Heart left ventricle (tissue), 16 donors: ENCODE measurements at regions of chr11 and their contacts with region 1.

Region 1: DNA sequence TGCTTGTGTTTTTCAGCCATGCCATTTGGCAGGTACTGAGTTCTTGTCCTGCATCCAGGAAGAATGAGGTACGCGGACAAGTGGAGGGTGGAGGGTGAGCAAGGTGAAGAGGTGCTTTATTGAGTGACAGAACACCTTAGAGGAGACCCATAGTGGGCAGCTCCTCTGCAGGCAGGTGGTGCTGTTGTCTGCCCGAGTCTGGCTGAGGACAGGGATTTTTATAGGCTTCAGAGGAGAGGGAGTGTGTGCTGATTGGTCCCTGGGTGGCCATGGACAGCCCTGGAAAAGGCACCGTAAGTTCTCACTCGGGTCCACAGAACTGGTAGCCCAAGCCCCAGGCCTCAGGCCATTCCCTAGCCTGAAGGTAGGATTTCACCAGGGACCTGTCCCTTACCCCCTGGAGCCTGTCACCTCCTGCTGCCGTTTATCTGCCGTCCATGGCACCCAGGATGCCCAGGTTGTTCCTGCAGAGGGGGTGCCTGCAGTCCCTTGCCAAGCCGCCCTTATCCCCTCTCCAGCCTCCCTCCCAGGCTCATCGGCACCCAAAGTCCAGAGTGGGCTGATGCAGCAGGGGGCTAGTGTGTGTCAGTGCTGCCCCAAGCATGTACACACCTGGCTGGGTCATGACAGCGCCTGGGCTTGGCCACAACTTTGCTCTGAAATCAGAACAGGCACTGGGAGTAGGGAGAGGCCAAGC is 213.6 kb downstream of the LRRC4C start:
- DNase-seq: peak in 4 of 5 donors; percentile 7 to 43 (median 24)
- ATAC-seq: peak; percentile 64 to 79 (median 71)
- H3K4me3 ChIP-seq: no peak overlapping the region
- H3K27ac ChIP-seq: no peak overlapping the region
- H3K4me1 ChIP-seq: no peaks in the 10 kb centered on the region
- H3K27me3 ChIP-seq: no peaks in the 10 kb centered on the region
- CTCF ChIP-seq: peak in 7 of 12 donors; percentile 8 to 40 (median 28)
- POLR2A ChIP-seq: no peak

Region 2: DNA sequence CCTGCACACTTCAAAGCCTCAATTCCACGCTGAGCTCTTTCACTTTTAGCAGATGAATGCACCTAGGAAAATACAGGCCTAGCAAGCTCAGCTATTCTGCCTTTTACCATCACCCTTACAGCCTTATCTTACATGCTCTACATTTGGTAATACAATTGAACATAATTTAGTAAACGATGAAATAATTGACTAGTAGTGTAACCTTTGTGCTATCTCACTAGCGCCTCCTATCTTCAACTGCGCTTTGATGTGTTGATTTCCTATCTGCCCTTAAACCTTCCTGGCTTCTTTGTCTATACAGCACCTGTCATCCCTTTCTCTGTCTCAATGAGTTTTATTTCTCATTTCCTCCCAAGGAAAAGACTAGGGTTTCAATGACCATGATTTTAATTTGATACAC is 63.9 kb after region 1 on chr11:
- intact Hi-C with region 1: loop called in 1 of 10 experiments (anchors 10 kb)
- DNase-seq: no peak
- ATAC-seq: no peak
- H3K4me3 ChIP-seq: no peak overlapping the region
- H3K27ac ChIP-seq: no peak overlapping the region
- H3K4me1 ChIP-seq: no peaks in the 10 kb centered on the region
- H3K27me3 ChIP-seq: no peaks in the 10 kb centered on the region
- CTCF ChIP-seq: no peak
- POLR2A ChIP-seq: no peak

Region 3: GRCh38 chr11:41419901-41420300 is 174.1 kb after region 1 on chr11:
- intact Hi-C with region 1: loop called in 1 of 10 experiments (anchors 10 kb)
- DNase-seq: no peak
- ATAC-seq: no peak
- H3K4me3 ChIP-seq: no peak overlapping the region
- H3K27ac ChIP-seq: no peak overlapping the region
- H3K4me1 ChIP-seq: no peaks in the 10 kb centered on the region
- H3K27me3 ChIP-seq: no peaks in the 10 kb centered on the region
- CTCF ChIP-seq: no peak
- POLR2A ChIP-seq: no peak

Region 4: DNA sequence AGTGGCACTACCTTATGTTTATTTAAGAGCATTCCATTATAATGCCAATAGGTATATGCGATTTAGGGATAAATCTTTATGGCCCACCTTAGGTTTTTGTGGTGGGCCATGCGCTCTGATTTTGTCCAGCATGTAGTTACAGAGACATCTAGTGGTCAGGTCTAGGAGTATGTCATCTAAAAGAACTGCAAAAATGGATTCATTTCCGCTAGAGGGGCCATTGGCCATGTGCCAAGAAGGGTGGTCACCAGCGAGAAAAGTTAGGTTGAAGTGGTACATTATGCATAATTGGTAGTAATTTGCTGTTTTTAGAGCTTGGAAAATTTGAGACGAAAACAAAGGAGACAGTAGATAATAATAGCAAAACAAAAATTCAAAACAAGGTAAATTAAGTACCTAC is 185.9 kb after region 1 on chr11:
- intact Hi-C with region 1: loop called in 6 of 10 experiments (anchors 5 to 10 kb)
- DNase-seq: no peak
- ATAC-seq: no peak
- H3K4me3 ChIP-seq: no peak overlapping the region
- H3K27ac ChIP-seq: no peak overlapping the region
- H3K4me1 ChIP-seq: no peaks in the 10 kb centered on the region
- H3K27me3 ChIP-seq: no peaks in the 10 kb centered on the region
- CTCF ChIP-seq: peak in 11 of 12 donors; percentile 20 to 62 (median 49)
- POLR2A ChIP-seq: no peak

Region 5: GRCh38 chr11:41437006-41437490 is 191.2 kb after region 1 on chr11:
- intact Hi-C with region 1: loop called in 5 of 10 experiments (anchors 5 to 10 kb)
- DNase-seq: no peak
- ATAC-seq: no peak
- H3K4me3 ChIP-seq: no peak overlapping the region
- H3K27ac ChIP-seq: no peak overlapping the region
- H3K4me1 ChIP-seq: no peaks in the 10 kb centered on the region
- H3K27me3 ChIP-seq: no peaks in the 10 kb centered on the region
- CTCF ChIP-seq: no peak
- POLR2A ChIP-seq: no peak